ENCODE measurements at regions of chr7 and their contacts with region 1.

Region 1: DNA sequence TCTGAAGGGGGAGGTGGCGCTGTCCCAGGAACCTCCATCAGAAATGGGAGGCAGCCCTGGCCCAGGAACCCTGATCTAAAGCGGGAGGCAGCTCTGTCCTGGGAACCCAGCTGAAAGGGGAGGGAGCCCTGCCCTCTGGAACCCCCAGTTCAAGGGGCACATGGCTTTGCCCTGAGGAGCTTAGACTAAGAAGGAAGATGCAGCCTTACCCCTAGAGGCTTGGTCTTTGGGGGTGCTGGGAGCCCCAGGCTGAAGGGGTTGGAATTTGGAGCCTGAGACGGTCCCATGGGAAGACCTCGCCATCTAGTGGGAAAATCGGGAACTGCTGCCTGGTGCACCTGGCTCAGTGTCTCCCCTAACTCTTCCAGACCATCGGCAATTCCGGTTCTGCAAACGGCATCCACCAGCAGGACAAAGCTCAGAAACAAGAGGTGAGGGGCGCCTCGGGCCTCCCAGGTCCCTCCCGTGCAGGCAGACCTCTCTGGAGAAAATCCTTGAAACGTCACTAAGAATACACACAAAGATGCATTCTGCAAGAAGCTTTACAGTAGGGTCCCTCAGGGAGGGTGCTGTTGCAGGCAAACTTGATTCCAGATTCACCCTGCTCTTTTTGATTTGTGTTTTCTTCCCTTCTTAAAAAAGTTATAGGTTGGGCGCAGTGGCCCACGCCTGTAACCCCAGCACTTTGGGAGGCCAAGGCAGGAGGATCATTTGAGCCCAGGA is 52.4 kb upstream of the GTF2IRD1 start:
- DNase-seq: peak; percentile 80
- H3K4me3 Mint-ChIP-seq: no peak overlapping the region
- H3K27ac Mint-ChIP-seq: no peak overlapping the region
- H3K4me1 Mint-ChIP-seq: no peaks in the 10 kb centered on the region
- H3K27me3 Mint-ChIP-seq: no peaks in the 10 kb centered on the region

Region 2: GRCh38 chr7:74068393-74069085 is 332.8 kb before region 1 on chr7:
- CTCF ChIA-PET with region 1: interaction called, 29 read pairs
- POLR2A ChIA-PET with region 1: no interaction called
- intact Hi-C with region 1: loop called (anchors 5 kb)
- DNase-seq: no peak
- H3K4me3 Mint-ChIP-seq: no peak overlapping the region
- H3K27ac Mint-ChIP-seq: no peak overlapping the region
- H3K4me1 Mint-ChIP-seq: no peaks in the 10 kb centered on the region
- H3K27me3 Mint-ChIP-seq: no peaks in the 10 kb centered on the region

Region 3: GRCh38 chr7:74206589-74207120 is 194.6 kb before region 1 on chr7:
- CTCF ChIA-PET with region 1: interaction called, 281 read pairs
- POLR2A ChIA-PET with region 1: interaction called, 8 read pairs
- intact Hi-C with region 1: loop called (anchors 1 kb)
- DNase-seq: peak; percentile 85
- H3K4me3 Mint-ChIP-seq: peak overlapping the region; percentile 20
- H3K27ac Mint-ChIP-seq: no peak overlapping the region
- H3K4me1 Mint-ChIP-seq: peaks cover 6% of the 10 kb centered on the region
- H3K27me3 Mint-ChIP-seq: no peaks in the 10 kb centered on the region

Region 4: GRCh38 chr7:74254129-74254857 is 147.0 kb before region 1 on chr7 and contains the start of gene RFC2:
- CTCF ChIA-PET with region 1: interaction called, 10 read pairs
- POLR2A ChIA-PET with region 1: no interaction called
- intact Hi-C with region 1: loop called (anchors 5 kb)
- DNase-seq: peak; percentile 98
- H3K4me3 Mint-ChIP-seq: peak within 1 kb of the TSS; percentile 98
- H3K27ac Mint-ChIP-seq: peak within 1 kb of the TSS; percentile 94
- H3K4me1 Mint-ChIP-seq: peaks cover 18% of the 10 kb centered on the region
- H3K27me3 Mint-ChIP-seq: no peaks in the 10 kb centered on the region
- total RNA-seq, gene RFC2: 80.8 to 81.1 TPM

Region 5: GRCh38 chr7:74289018-74289658 is 112.2 kb before region 1 on chr7 and contains the start of gene CLIP2:
- CTCF ChIA-PET with region 1: interaction called, 21 read pairs
- POLR2A ChIA-PET with region 1: no interaction called
- intact Hi-C with region 1: no loop called
- DNase-seq: peak; percentile 87
- H3K4me3 Mint-ChIP-seq: peak within 1 kb of the TSS; percentile 69
- H3K27ac Mint-ChIP-seq: no peak within 1 kb of the TSS
- H3K4me1 Mint-ChIP-seq: peaks cover 16% of the 10 kb centered on the region
- H3K27me3 Mint-ChIP-seq: peaks cover 14% of the 10 kb centered on the region
- total RNA-seq, gene CLIP2: 2.4 to 2.7 TPM

Region 6: GRCh38 chr7:74388880-74389415 is 12.3 kb before region 1 on chr7:
- CTCF ChIA-PET with region 1: interaction called, 15 read pairs
- POLR2A ChIA-PET with region 1: no interaction called
- intact Hi-C with region 1: no loop called
- DNase-seq: no peak
- H3K4me3 Mint-ChIP-seq: no peak overlapping the region
- H3K27ac Mint-ChIP-seq: no peak overlapping the region
- H3K4me1 Mint-ChIP-seq: no peaks in the 10 kb centered on the region
- H3K27me3 Mint-ChIP-seq: no peaks in the 10 kb centered on the region

Region 7: GRCh38 chr7:74482629-74483401 is 81.5 kb after region 1 on chr7:
- CTCF ChIA-PET with region 1: no interaction called
- POLR2A ChIA-PET with region 1: no interaction called
- intact Hi-C with region 1: no loop called
- DNase-seq: no peak
- H3K4me3 Mint-ChIP-seq: no peak overlapping the region
- H3K27ac Mint-ChIP-seq: no peak overlapping the region
- H3K4me1 Mint-ChIP-seq: no peaks in the 10 kb centered on the region
- H3K27me3 Mint-ChIP-seq: peaks cover 3% of the 10 kb centered on the region

Measured in activated CD4-positive, alpha-beta memory T cell treated with anti-CD3 and anti-CD28 coated beads for 36 hours (primary cell).